ENCODE measurements at regions of chr16 and their contacts with region 1.

Region 1: GRCh38 chr16:31094424-31095120 is at the start of gene VKORC1:
- DNase-seq: peak; percentile 93
- H3K4me3 Mint-ChIP-seq: peak within 1 kb of the TSS; percentile 93
- H3K27ac Mint-ChIP-seq: peak within 1 kb of the TSS; percentile 94
- H3K4me1 Mint-ChIP-seq: peaks cover 37% of the 10 kb centered on the region
- H3K27me3 Mint-ChIP-seq: peaks cover 6% of the 10 kb centered on the region

Region 2: GRCh38 chr16:30984669-30985400 is 109.7 kb before region 1 on chr16 and contains the start of gene HSD3B7:
- CTCF ChIA-PET with region 1: interaction called, 12 read pairs
- DNase-seq: peak; percentile 88
- H3K4me3 Mint-ChIP-seq: peak within 1 kb of the TSS; percentile 38
- H3K27ac Mint-ChIP-seq: peak within 1 kb of the TSS; percentile 45
- H3K4me1 Mint-ChIP-seq: peaks cover 11% of the 10 kb centered on the region
- H3K27me3 Mint-ChIP-seq: no peaks in the 10 kb centered on the region

Region 3: DNA sequence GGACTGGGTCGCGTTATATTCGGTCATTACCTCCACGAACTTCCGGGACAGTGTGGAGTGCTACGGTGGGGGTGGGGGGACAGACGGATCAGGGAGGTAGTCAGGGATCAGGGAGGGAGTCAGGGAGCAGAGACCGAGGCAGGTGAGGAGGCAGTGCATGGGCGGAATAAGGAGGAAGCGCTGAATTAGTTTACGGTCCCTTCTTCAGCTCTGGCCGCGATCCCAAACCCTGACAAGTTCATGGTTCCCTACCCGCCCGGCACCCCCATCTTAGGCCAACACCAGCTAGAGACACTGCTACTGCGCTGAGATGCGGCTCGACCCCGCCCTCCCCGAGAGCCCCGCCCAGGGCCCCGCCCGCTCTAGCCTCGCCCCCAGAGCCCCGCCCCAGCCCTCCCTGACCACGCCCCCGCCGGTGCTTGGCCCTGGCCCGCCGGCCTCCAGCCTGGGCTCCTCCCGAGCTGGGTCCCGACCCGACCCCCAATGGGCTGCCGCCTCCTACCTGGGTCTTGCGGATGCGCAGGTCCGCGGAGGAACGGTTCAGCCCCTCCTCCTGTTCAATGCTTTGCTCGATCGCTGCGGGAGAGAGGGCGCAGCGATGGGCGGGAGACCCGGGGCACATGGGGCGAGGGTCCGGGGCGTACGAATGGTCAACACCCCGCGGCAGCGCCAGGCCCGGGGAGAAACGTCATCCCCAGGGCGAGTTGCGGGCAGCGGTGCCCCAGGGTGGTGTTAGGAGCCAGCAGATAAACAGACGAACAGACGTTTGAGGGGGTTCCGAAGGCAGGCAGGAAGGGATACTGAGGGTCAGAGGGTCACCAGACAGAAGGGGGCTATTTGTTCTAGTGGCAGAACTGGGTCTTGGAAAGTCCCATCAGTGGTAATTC is 97.3 kb before region 1 on chr16:
- CTCF ChIA-PET with region 1: no interaction called
- DNase-seq: peak; percentile 88
- H3K4me3 Mint-ChIP-seq: peak overlapping the region; percentile 74
- H3K27ac Mint-ChIP-seq: peak overlapping the region; percentile 20
- H3K4me1 Mint-ChIP-seq: peaks cover 17% of the 10 kb centered on the region
- H3K27me3 Mint-ChIP-seq: peaks cover 48% of the 10 kb centered on the region